Gastrocnemius medialis (tissue), 4 donors: ENCODE measurements at regions of chr12 and their contacts with region 1.

Region 1: GRCh38 chr12:104189915-104190555 is 25.5 kb upstream of the TXNRD1 start:
- DNase-seq: no peak
- ATAC-seq: no peak
- H3K4me3 ChIP-seq: no peak overlapping the region
- H3K27ac ChIP-seq: no peak overlapping the region
- H3K4me1 ChIP-seq: no peaks in the 10 kb centered on the region
- H3K27me3 ChIP-seq: no peaks in the 10 kb centered on the region
- CTCF ChIP-seq: no peak
- POLR2A ChIP-seq: no peak

Region 2: DNA sequence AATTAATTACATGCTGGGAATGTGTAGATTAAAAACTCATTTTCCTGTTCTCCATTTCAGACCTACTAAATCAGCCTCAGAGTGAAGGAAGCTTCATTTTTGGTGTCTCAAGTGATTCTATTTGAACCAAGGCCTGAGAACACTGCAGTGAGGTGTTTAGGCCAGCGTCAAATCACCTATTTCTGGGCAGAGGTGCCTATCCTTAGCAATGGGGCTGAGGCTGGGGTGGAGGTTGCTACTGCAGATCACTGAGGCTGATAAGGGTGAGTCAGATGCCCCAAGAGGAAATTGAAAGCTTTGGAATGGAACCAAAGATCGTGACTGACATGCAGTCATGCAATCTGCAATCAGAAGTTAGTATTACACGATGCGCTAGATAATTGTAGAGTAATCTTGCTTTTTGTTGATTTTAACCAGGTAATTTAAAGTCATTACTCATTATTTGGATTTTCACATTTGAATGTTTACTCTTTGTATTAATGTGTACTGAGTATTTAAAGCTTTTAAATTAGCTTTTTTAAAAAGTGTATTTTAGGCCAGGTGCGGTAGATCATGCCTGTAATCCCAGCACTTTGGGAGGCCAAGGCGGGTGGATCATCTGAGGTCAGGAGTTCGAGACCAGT is 30.0 kb after region 1 on chr12:
- in situ Hi-C with region 1: no loop called
- intact Hi-C with region 1: no loop called
- DNase-seq: no peak
- ATAC-seq: peak in 1 of 2 donors; percentile 28
- H3K4me3 ChIP-seq: no peak overlapping the region
- H3K27ac ChIP-seq: peak overlapping the region; percentile 56 to 72 (median 66)
- H3K4me1 ChIP-seq: peaks cover 10 to 16% of the 10 kb centered on the region in 2 donors
- H3K27me3 ChIP-seq: no peaks in the 10 kb centered on the region
- CTCF ChIP-seq: no peak
- POLR2A ChIP-seq: no peak

Region 3: DNA sequence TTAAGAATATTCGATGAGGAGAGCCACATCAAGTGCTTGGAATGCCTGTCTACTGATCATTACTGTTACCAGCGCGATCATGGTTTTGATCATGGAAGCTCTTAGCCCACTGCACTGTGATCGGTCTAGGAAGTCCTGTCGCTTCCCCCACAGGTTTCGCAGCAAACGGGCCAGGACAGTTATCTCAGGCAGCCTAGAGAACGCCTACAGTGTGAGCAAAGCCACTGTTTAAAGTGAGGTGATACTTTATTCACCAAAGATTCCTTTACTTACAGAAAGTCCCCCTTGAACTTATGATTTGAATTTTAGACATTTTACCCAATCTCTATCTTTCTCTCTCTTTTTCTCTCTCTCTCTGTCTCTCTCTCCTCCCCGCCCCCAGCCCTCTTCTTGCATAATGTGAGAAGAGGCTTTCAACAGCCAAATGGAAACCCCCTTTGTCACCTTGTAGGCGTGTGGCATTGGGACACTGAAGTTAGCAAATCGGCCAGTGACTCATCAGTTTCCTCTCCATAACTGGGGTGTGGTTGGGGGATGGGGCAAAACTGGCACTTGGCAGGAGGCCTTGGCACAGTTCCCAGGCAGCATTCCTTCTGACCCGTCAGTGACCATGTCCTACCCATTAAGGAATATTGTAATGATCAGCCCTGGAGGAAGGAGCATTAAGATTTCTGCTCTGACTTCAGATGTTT is 481.5 kb after region 1 on chr12:
- in situ Hi-C with region 1: no loop called
- intact Hi-C with region 1: no loop called
- DNase-seq: peak; percentile 54 to 78
- ATAC-seq: peak; percentile 55 to 74
- H3K4me3 ChIP-seq: no peak overlapping the region
- H3K27ac ChIP-seq: peak overlapping the region in 3 of 4 donors; percentile 54 to 68 (median 54)
- H3K4me1 ChIP-seq: peaks cover 14 to 23% of the 10 kb centered on the region in 2 donors
- H3K27me3 ChIP-seq: no peaks in the 10 kb centered on the region
- CTCF ChIP-seq: no peak
- POLR2A ChIP-seq: no peak

Region 4: GRCh38 chr12:105053116-105053572 is 863.1 kb after region 1 on chr12:
- in situ Hi-C with region 1: loop called in 1 of 4 experiments (anchors 10 kb)
- intact Hi-C with region 1: no loop called
- DNase-seq: peak; percentile 14 to 65
- ATAC-seq: peak; percentile 50 to 65
- H3K4me3 ChIP-seq: no peak overlapping the region
- H3K27ac ChIP-seq: no peak overlapping the region
- H3K4me1 ChIP-seq: no peaks in the 10 kb centered on the region
- H3K27me3 ChIP-seq: no peaks in the 10 kb centered on the region
- CTCF ChIP-seq: peak; percentile 57 to 88 (median 71)
- POLR2A ChIP-seq: no peak